ENCODE measurements at regions of chr17 and their contacts with region 1.

Region 1: GRCh38 chr17:62995377-62995885 is 29.4 kb downstream of the TANC2 start:
- DNase-seq: peak; percentile 21
- H3K4me3 Mint-ChIP-seq: no peak overlapping the region
- H3K27ac Mint-ChIP-seq: no peak overlapping the region
- H3K4me1 Mint-ChIP-seq: no peaks in the 10 kb centered on the region
- H3K27me3 Mint-ChIP-seq: no peaks in the 10 kb centered on the region
- CTCF ChIP-seq: peak; percentile 19

Region 2: DNA sequence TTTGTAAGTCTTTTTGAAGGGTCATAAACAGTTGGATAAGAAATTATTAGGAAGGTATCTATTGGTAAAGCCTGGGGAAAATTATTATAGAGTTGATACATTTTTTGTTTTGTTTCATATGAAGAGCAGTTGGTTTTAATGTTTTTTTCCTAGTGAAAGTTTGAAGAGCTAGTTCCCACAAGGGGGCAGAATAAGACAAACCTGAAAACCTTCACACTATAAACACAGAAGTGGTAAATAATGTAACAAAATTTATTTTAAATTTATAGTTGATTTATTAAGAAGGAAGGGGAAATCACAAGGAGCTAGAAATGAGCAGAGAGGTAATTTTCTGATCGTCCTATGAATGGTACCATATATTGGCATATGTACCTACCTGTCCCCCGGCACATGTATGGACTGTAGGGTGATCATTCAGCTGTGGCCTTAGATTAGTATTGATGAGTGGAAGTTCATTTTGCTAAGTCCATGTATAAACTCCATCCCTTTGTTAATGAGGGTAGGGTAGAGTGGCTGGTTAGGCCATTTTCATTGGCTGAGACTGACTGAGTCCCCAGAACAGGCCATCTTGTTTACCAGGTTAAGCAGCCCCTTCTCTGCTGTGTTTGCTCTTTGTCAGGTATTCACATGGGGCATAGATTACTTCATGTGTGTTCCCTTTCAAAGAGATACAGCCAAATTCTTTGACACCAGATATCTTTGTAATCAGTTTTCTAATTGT is 87.0 kb after region 1 on chr17:
- CTCF ChIA-PET with region 1: interaction called, 10 read pairs
- intact Hi-C with region 1: no loop called
- DNase-seq: no peak
- H3K4me3 Mint-ChIP-seq: no peak overlapping the region
- H3K27ac Mint-ChIP-seq: no peak overlapping the region
- H3K4me1 Mint-ChIP-seq: peaks cover 9% of the 10 kb centered on the region
- H3K27me3 Mint-ChIP-seq: no peaks in the 10 kb centered on the region
- CTCF ChIP-seq: peak; percentile 14